Dendritic cell treated with granulocyte-macrophage colony-stimulating factor and Interleukin-4, amounts not matched to agents 40 ng/mL and 50 ng/mL, for 4 days (primary cell): ENCODE measurements at regions of chr11 and their contacts with region 1.

Region 1: GRCh38 chr11:15208378-15209222 is 93.9 kb downstream of the INSC start:
- H3K4me3 Mint-ChIP-seq: no peak overlapping the region
- H3K27ac Mint-ChIP-seq: no peak overlapping the region
- H3K4me1 Mint-ChIP-seq: no peaks in the 10 kb centered on the region
- H3K27me3 Mint-ChIP-seq: no peaks in the 10 kb centered on the region

Region 2: DNA sequence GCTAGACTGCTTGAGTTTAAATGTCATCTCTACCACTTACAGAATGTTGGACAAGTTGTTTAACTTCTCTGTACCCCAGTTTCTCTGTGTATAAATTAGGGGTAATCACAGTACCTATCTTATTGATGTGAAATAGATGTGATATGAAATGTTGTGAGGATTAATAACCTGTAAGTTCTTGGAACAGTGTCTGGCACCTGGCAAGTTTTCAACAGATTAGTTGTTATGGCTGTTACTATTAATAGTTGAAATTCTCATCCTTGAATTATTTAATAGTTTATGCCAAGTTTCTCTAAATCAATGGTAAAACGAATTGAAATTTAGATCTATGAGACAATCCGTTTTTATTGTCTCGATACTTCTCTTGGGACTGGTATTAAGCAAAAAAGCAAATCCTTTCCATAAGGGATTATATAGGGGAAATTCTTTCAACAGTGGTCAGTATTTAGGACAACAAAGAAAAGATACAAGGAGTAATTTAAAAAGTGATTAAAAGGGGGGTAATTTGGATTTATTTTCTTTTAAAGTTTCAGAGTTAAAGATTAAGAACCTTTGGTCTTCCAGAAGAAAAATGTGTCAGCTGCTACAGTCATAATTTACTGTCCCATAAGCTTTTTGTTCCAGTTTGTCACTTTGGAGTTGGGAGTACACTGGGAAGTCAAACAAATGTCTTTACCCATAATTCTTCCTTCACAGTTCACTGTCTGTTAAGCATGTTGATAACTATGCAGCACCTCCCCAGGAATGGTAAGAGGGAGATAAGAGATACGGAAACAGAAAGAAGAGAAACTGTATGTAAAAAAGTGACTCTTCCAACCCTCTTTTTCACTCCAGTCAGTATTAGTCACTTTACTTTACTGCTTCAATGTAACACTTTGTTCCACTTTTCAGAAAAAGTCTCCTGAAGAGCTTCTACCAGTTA is 551.8 kb before region 1 on chr11:
- intact Hi-C with region 1: no loop called
- H3K4me3 Mint-ChIP-seq: no peak overlapping the region
- H3K27ac Mint-ChIP-seq: no peak overlapping the region
- H3K4me1 Mint-ChIP-seq: no peaks in the 10 kb centered on the region
- H3K27me3 Mint-ChIP-seq: no peaks in the 10 kb centered on the region

Region 3: GRCh38 chr11:15101072-15101709 is 107.4 kb before region 1 on chr11:
- intact Hi-C with region 1: loop called (anchors 1 kb)
- H3K4me3 Mint-ChIP-seq: no peak overlapping the region
- H3K27ac Mint-ChIP-seq: no peak overlapping the region
- H3K4me1 Mint-ChIP-seq: no peaks in the 10 kb centered on the region
- H3K27me3 Mint-ChIP-seq: peaks cover 2% of the 10 kb centered on the region

Region 4: GRCh38 chr11:15852179-15852578 is 643.6 kb after region 1 on chr11:
- intact Hi-C with region 1: no loop called
- H3K4me3 Mint-ChIP-seq: no peak overlapping the region
- H3K27ac Mint-ChIP-seq: peak overlapping the region; percentile 78
- H3K4me1 Mint-ChIP-seq: peaks cover 41% of the 10 kb centered on the region
- H3K27me3 Mint-ChIP-seq: peaks cover 18% of the 10 kb centered on the region